ENCODE measurements at regions of chr11 and their contacts with region 1.

Region 1: GRCh38 chr11:130390071-130390758 is 38.2 kb downstream of the ADAMTS8 start:
- DNase-seq: no peak
- H3K4me3 ChIP-seq: no peak overlapping the region
- H3K27ac ChIP-seq: peak overlapping the region; percentile 56 to 75 (median 61)
- H3K4me1 ChIP-seq: peaks cover 9 to 29% (median 22%) of the 10 kb centered on the region in 4 donors
- H3K27me3 ChIP-seq: no peaks in the 10 kb centered on the region
- CTCF ChIP-seq: peak in 3 of 5 experiments; percentile 9 to 20 (median 14)
- EP300 ChIP-seq: peak; percentile 52
- POLR2A ChIP-seq: no peak

Region 2: GRCh38 chr11:130314750-130315285 is 75.4 kb before region 1 on chr11 and contains the start of gene ZBTB44:
- in situ Hi-C with region 1: no loop called
- intact Hi-C with region 1: no loop called
- DNase-seq: peak; percentile 94
- H3K4me3 ChIP-seq: peak within 1 kb of the TSS; percentile 63 to 81 (median 70)
- H3K27ac ChIP-seq: peak within 1 kb of the TSS; percentile 96 to 98 (median 96)
- H3K4me1 ChIP-seq: peaks cover 0 to 41% (median 16%) of the 10 kb centered on the region in 4 donors
- H3K27me3 ChIP-seq: no peaks in the 10 kb centered on the region
- CTCF ChIP-seq: no peak
- EP300 ChIP-seq: no peak
- POLR2A ChIP-seq: peak; percentile 22
- total RNA-seq, gene ZBTB44: 29.7 to 64.0 (median 48.6) TPM

Region 3: DNA sequence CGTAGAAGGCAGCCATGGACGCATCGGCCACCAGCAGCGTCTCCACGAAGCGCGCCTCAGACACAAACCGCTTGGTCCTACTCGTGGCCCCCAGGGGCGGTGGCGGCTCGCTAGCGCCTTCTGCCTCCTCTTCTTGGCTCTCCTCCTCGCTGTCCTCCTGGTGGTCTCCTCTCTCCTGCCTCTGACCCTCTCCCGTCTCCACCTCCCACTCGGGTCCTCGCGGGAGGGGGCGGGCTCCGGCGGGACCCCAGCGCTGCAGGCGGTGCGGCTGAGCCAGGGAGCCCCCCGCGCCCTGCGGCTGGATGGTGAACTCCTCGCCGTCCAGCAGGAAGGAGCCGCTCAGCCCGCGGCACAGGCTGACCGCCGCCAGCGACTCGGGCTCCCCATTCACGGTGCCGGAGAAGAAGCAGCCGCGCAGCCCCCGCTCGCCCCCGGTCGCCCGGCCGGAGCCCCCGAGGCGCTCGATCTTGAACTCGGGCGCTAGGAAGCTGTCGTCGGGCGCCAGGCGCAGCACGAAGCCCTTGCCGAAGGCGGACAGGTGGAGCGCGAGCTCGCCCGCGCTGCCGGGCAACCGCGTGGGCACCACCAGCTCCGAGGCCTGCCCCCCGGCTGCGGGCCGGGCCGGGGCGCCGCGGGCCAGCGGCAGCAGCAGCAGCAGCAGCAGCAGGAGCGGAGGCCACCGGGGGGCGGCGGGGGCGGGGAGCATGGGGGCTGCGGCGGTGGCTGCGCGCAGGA is 37.5 kb after region 1 on chr11:
- in situ Hi-C with region 1: no loop called
- intact Hi-C with region 1: loop called (anchors 2 kb)
- DNase-seq: peak; percentile 25
- H3K4me3 ChIP-seq: peak overlapping the region; percentile 31 to 57 (median 44)
- H3K27ac ChIP-seq: peak overlapping the region in 3 of 4 donors; percentile 55 to 72 (median 61)
- H3K4me1 ChIP-seq: peaks cover 0 to 16% (median 5%) of the 10 kb centered on the region in 4 donors
- H3K27me3 ChIP-seq: peaks cover 51% of the 10 kb centered on the region
- CTCF ChIP-seq: peak in 3 of 5 experiments; percentile 21 to 41 (median 33)
- EP300 ChIP-seq: no peak
- POLR2A ChIP-seq: no peak